AG04450 (cell line): ENCODE measurements at regions of chr18 and their contacts with region 1.

Region 1: DNA sequence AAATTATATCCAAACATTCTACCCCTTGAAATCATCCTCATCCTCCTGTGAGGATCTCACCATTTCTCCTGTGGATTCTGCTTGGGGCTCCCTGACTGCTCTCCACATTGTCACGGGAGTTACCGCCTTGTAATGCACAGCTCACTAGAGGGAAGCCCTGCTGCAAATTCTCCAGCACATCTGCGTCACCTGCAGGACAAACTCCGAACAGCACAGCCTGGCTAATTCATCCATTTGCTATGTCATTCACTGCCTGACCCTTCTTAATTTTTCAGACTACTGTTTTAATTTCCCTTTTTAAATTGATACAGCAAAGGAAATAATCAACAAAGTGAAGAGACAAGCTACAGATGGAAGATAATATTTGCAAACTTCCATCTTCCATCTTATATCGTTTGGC is 627.4 kb downstream of the FBXO15 start:
- DNase-seq: no peak
- H3K4me3 ChIP-seq: no peak overlapping the region
- H3K27ac ChIP-seq: no peak overlapping the region
- H3K27me3 ChIP-seq: no peaks in the 10 kb centered on the region
- CTCF ChIP-seq: peak; percentile 23; the same call in 1 of the 2 replicates

Region 2: GRCh38 chr18:72768681-72769229 is 751.5 kb before region 1 on chr18:
- CTCF ChIA-PET with region 1: interaction called, 14 read pairs
- POLR2A ChIA-PET with region 1: no interaction called
- DNase-seq: no peak
- H3K4me3 ChIP-seq: no peak overlapping the region
- H3K27ac ChIP-seq: no peak overlapping the region
- H3K27me3 ChIP-seq: no peaks in the 10 kb centered on the region
- CTCF ChIP-seq: no peak

Region 3: GRCh38 chr18:73235491-73235890 is 284.7 kb before region 1 on chr18:
- CTCF ChIA-PET with region 1: no interaction called
- POLR2A ChIA-PET with region 1: no interaction called
- DNase-seq: peak; percentile 86
- H3K4me3 ChIP-seq: no peak overlapping the region
- H3K27ac ChIP-seq: peak overlapping the region; percentile 40
- H3K27me3 ChIP-seq: no peaks in the 10 kb centered on the region
- CTCF ChIP-seq: no peak